ENCODE measurements at regions of chr11 and their contacts with region 1.

Region 1: GRCh38 chr11:2992234-2992996 is at the start of gene NAP1L4:
- DNase-seq: peak; percentile 99
- H3K4me3 Mint-ChIP-seq: peak within 1 kb of the TSS; percentile 98
- H3K27ac Mint-ChIP-seq: peak within 1 kb of the TSS; percentile 99
- H3K4me1 Mint-ChIP-seq: peaks cover 30% of the 10 kb centered on the region
- H3K27me3 Mint-ChIP-seq: no peaks in the 10 kb centered on the region
- total RNA-seq, gene NAP1L4: 263 and 272 TPM in 2 replicates

Region 2: GRCh38 chr11:2305140-2305840 is 687.1 kb before region 1 on chr11:
- intact Hi-C with region 1: no loop called
- DNase-seq: peak; percentile 95
- H3K4me3 Mint-ChIP-seq: peak overlapping the region; percentile 71
- H3K27ac Mint-ChIP-seq: peak overlapping the region; percentile 29
- H3K4me1 Mint-ChIP-seq: peaks cover 31% of the 10 kb centered on the region
- H3K27me3 Mint-ChIP-seq: no peaks in the 10 kb centered on the region

Region 3: DNA sequence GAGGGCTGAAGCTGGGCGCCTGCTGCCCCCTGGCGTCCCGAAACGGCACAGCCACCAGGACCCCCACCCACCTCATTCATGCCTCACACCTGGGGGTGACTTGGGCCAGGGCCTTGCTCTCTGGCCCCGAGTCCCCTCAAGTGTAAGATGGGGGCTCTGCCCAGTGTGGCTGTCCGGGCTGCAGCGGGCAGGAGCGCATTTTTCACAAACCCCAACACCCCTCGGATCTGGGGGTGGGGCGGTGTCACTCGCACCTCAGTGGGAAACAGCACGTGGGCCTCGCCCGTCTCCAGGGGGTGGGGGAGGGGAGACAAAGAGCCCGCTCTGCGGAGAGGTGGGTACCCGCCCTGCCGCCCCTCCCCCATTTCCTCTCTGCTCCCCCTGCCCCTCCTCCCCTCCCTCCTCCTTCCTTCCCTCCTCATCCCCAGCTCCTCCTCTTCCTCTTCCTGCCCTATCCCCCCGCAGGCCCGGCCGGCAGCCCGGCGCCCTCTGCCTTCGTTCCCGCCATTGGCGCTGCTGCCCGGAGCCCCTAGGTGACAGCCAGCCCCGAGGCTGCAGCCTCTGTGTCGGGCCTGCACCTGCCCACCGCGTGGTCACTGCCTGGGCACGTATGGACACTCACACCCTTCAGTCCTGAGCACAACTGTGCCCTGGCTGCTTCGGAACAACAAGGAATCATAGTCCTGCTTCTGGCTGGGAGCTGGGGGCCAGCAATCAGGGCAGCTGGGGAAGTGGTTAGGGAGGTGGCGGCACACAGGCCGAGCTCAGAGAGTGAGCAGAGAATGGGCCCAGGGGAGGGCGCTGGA is 100.0 kb before region 1 on chr11:
- intact Hi-C with region 1: loop called (anchors 5 kb)
- DNase-seq: peak; percentile 90
- H3K4me3 Mint-ChIP-seq: peak overlapping the region; percentile 90
- H3K27ac Mint-ChIP-seq: peak overlapping the region; percentile 80
- H3K4me1 Mint-ChIP-seq: peaks cover 12% of the 10 kb centered on the region
- H3K27me3 Mint-ChIP-seq: peaks cover under 1% of the 10 kb centered on the region

Region 4: DNA sequence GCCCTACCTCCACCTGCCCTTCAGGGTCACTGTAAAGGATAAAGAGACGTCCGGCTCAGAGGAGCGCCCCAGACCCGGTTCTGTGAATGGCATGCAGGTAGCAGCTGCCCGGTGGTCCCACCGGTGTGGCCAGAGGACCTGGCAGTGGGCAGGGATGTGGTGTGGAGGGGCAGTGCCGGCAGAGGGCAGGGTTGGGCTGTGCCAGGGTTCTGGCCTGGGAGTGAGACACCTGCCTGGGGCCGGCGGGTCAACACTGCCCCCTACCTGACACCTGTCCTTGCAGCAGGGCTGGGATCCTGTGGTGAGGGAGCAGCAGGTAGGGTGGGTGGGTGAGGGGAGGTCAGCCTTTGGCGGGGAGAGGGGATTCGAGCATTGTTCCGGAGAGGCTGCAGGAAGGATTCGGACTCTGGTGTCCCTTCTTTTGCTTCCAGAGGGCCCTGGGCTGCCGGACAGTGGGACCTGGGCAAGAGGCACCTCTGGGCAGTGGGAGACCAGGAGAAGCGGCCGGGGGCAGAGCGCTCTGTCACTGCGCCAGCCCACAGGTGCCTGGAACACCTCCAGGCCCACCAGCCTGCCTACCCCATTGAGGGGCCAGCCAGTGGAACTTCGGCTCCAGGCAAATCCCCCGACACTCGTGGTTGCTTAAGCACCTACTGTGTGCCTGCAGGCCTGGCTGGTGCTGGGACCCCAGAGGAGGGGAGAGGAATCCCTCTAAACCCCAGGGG is 61.5 kb before region 1 on chr11:
- intact Hi-C with region 1: loop called (anchors 1 kb)
- DNase-seq: peak; percentile 83
- H3K4me3 Mint-ChIP-seq: peak overlapping the region; percentile 92
- H3K27ac Mint-ChIP-seq: peak overlapping the region; percentile 89
- H3K4me1 Mint-ChIP-seq: peaks cover 29% of the 10 kb centered on the region
- H3K27me3 Mint-ChIP-seq: peaks cover 18% of the 10 kb centered on the region

Region 5: GRCh38 chr11:2945031-2945756 is 47.2 kb before region 1 on chr11:
- intact Hi-C with region 1: loop called (anchors 5 kb)
- DNase-seq: peak; percentile 90
- H3K4me3 Mint-ChIP-seq: peak overlapping the region; percentile 5
- H3K27ac Mint-ChIP-seq: peak overlapping the region; percentile 51
- H3K4me1 Mint-ChIP-seq: peaks cover 31% of the 10 kb centered on the region
- H3K27me3 Mint-ChIP-seq: no peaks in the 10 kb centered on the region

Region 6: DNA sequence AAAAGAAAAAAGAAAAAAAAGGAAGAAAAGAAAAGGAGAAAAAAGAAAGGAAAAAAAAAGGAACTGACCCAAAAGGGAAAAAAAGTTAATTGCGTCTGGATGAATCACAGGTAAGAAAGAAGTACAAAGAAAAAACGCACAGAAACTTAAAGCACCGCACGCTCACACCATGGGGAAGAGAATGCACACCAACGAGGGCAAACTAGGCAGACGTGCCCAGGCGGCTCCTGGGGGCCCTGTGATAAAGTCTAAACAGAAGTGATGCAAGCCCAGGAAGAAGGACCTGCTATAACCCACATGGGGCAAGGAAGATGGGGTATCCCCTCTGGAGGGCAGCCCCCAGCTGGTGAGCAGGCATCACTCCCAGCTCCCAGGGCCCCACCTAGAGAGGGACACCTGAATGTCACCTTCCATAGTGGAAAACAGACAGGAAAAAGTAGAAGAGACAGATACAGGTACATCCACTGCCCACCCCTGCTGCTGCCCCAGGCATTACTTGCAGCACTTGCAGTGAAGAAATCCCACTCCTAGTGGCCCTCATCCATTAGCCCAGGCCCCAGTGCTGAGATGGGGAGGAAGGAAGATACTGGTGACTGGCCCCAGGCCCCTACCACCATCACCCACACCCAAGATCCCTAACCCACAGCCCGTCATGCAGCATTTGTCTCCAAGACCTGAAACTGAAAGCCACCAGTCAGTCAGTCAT is 29.1 kb before region 1 on chr11:
- intact Hi-C with region 1: no loop called
- DNase-seq: no peak
- H3K4me3 Mint-ChIP-seq: no peak overlapping the region
- H3K27ac Mint-ChIP-seq: peak overlapping the region; percentile 53
- H3K4me1 Mint-ChIP-seq: peaks cover 33% of the 10 kb centered on the region
- H3K27me3 Mint-ChIP-seq: no peaks in the 10 kb centered on the region

Region 7: GRCh38 chr11:2975594-2975993 is 16.8 kb before region 1 on chr11:
- intact Hi-C with region 1: loop called (anchors 2 kb)
- DNase-seq: peak; percentile 82
- H3K4me3 Mint-ChIP-seq: no peak overlapping the region
- H3K27ac Mint-ChIP-seq: peak overlapping the region; percentile 74
- H3K4me1 Mint-ChIP-seq: peaks cover 24% of the 10 kb centered on the region
- H3K27me3 Mint-ChIP-seq: no peaks in the 10 kb centered on the region

Region 8: GRCh38 chr11:3014057-3014938 is 21.9 kb after region 1 on chr11:
- intact Hi-C with region 1: loop called (anchors 1 kb)
- DNase-seq: peak; percentile 94
- H3K4me3 Mint-ChIP-seq: peak overlapping the region; percentile 62
- H3K27ac Mint-ChIP-seq: peak overlapping the region; percentile 93
- H3K4me1 Mint-ChIP-seq: peaks cover 56% of the 10 kb centered on the region
- H3K27me3 Mint-ChIP-seq: no peaks in the 10 kb centered on the region

Region 9: GRCh38 chr11:3057069-3057963 is 64.9 kb after region 1 on chr11 and contains the start of gene CARS1:
- intact Hi-C with region 1: loop called (anchors 2 kb)
- DNase-seq: peak; percentile 98
- H3K4me3 Mint-ChIP-seq: peak within 1 kb of the TSS; percentile 92
- H3K27ac Mint-ChIP-seq: peak within 1 kb of the TSS; percentile 88
- H3K4me1 Mint-ChIP-seq: peaks cover 32% of the 10 kb centered on the region
- H3K27me3 Mint-ChIP-seq: peaks cover 1% of the 10 kb centered on the region
- total RNA-seq, gene CARS1: 56.5 and 63.1 TPM in 2 replicates

Region 10: GRCh38 chr11:3245071-3245470 is 252.7 kb after region 1 on chr11:
- intact Hi-C with region 1: no loop called
- DNase-seq: no peak
- H3K4me3 Mint-ChIP-seq: no peak overlapping the region
- H3K27ac Mint-ChIP-seq: no peak overlapping the region
- H3K4me1 Mint-ChIP-seq: no peaks in the 10 kb centered on the region
- H3K27me3 Mint-ChIP-seq: peaks cover 8% of the 10 kb centered on the region